OCI-LY7 (cell line): ENCODE measurements at regions of chr7 and their contacts with region 1.

Region 1: GRCh38 chr7:70805360-70805759 is 326.6 kb upstream of the GALNT17 start:
- DNase-seq: peak; percentile 59
- H3K4me3 ChIP-seq: peak overlapping the region; percentile 50
- H3K27ac ChIP-seq: peak overlapping the region; percentile 42
- H3K4me1 ChIP-seq: peaks cover 42% of the 10 kb centered on the region
- CTCF ChIP-seq: no peak

Region 2: DNA sequence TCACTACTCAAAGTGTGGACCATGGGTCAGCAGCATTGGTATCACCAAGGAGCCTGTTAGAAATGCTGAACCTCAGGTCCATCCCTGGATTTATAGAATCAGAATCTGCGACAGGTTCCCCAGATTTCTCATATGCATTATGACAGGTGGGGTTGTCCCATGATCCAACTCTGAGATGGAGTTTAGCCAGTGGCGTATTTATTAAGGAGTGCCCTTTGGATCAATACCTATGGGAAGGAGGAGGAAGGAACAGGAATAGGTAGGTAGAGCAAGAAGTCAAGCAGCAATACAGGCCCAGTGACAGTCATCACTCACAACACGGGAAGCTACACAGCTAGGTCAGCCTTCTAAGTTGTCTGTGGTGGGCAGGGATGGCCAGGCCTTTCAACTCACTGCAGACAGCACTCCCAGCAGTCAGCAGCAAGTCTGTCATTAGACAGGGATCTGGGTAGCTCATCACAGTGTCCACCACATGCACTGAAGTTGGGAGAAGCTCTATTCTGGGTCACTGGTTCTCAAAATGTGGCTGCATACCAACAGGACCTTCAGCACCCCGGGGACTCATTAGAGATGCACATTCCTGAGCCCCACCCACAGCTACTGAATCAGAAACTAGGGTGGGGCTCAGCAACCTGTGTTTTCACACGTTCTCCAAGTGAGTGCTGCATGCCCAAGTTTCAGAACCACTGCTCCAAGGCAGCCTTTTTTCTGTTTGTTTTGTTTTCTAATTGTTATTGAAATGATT is 205.7 kb before region 1 on chr7:
- CTCF ChIA-PET with region 1: no interaction called
- POLR2A ChIA-PET with region 1: no interaction called
- intact Hi-C with region 1: no loop called
- DNase-seq: no peak
- H3K4me3 ChIP-seq: no peak overlapping the region
- H3K27ac ChIP-seq: no peak overlapping the region
- H3K4me1 ChIP-seq: no peaks in the 10 kb centered on the region
- CTCF ChIP-seq: no peak

Region 3: DNA sequence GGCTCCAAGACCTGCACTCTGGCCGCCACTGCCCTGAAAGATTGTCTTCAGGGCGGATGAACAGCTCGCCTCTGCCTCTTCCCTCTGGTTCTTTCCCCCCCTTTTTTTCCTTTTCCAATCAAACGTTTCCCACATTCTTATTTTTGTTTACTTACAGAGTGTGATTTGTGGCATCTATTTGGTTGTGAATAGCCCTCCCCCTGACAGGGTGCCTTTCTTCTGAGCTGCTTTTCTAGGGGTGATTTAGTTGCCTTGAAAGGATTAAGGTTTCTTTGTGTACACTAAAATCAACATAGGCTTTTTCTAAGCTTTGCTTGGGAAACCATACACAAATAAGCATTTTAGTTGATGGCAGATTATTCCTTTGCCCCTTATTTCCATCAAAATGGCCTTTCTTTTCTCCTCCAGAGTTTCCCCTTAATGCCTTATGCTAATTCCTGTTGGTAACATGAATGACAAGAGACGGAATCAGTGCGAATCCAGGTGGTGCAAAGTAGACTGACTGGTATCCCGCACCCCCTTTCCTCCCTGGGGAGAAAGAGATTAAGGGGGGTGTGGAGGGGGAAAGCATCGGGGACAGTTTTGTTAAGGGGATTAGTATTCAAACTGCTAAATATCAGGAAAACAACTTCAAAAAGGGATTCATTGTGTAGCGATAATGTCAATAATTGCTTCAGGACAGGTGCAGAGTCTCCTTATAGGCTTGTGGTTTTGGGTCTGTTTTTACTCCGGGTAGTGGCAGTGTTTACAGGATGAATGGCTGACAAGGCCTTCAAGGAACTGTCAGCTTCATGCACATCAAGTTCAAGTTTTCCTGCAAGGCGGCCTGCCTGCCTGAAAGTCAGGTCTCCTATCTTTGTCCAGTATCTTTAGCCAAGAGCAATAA is 105.1 kb before region 1 on chr7:
- CTCF ChIA-PET with region 1: no interaction called
- POLR2A ChIA-PET with region 1: interaction called, 4 read pairs
- intact Hi-C with region 1: loop called (anchors 5 kb)
- DNase-seq: peak; percentile 65
- H3K4me3 ChIP-seq: no peak overlapping the region
- H3K27ac ChIP-seq: peak overlapping the region; percentile 8
- H3K4me1 ChIP-seq: peaks cover 40% of the 10 kb centered on the region
- CTCF ChIP-seq: no peak

Region 4: GRCh38 chr7:70763961-70764691 is 41.2 kb before region 1 on chr7:
- CTCF ChIA-PET with region 1: no interaction called
- POLR2A ChIA-PET with region 1: no interaction called
- intact Hi-C with region 1: loop called (anchors 5 kb)
- DNase-seq: peak; percentile 70
- H3K4me3 ChIP-seq: peak overlapping the region; percentile 63
- H3K27ac ChIP-seq: peak overlapping the region; percentile 85
- H3K4me1 ChIP-seq: peaks cover 44% of the 10 kb centered on the region
- CTCF ChIP-seq: no peak